Esophagus muscularis mucosa (tissue), 4 donors: ENCODE measurements at regions of chr6 and their contacts with region 1.

Region 1: GRCh38 chr6:137313928-137314855 is 95.0 kb upstream of the IFNGR1 start:
- DNase-seq: no peak
- H3K4me3 ChIP-seq: peak overlapping the region in 2 of 4 donors; percentile 26 to 32
- H3K27ac ChIP-seq: no peak overlapping the region
- H3K4me1 ChIP-seq: peaks cover 8 to 22% (median 14%) of the 10 kb centered on the region in 4 donors
- H3K27me3 ChIP-seq: no peaks in the 10 kb centered on the region
- CTCF ChIP-seq: peak; percentile 76 to 89 (median 83)
- EP300 ChIP-seq: no peak
- POLR2A ChIP-seq: no peak

Region 2: DNA sequence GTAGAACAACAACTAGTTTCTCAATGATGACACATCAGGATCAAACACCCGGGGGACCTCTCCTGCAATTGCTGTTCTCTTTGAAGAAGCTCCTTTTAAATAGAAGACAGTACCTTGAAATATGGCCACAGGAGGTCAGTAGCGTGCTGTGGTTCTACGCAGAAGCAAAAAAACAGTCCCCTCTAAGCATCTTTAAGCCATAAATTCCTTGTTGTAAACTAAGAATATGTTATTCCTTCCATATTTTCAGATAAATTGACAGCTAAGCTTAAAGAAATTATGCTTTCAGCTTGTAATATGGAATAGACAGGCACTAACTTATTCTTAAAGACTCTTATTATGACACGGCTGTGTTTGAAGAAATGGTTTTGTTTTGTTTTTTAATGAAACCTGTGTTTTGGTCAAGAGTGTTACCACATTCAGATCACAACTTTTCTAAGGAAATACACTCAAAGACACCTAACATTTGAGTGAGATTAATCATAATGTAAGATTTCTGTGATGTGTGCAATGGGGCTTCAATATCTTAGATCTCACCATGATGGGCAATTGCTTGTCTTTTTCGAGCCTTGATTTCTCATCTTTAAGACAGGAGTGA is 219.7 kb before region 1 on chr6:
- intact Hi-C with region 1: loop called (anchors 2 kb)
- DNase-seq: no peak
- H3K4me3 ChIP-seq: no peak overlapping the region
- H3K27ac ChIP-seq: no peak overlapping the region
- H3K4me1 ChIP-seq: no peaks in the 10 kb centered on the region
- H3K27me3 ChIP-seq: peaks cover 0 to 8% (median 0%) of the 10 kb centered on the region in 4 donors
- CTCF ChIP-seq: peak; percentile 61 to 82 (median 76)
- EP300 ChIP-seq: no peak
- POLR2A ChIP-seq: no peak

Region 3: GRCh38 chr6:137264311-137265075 is 49.7 kb before region 1 on chr6:
- intact Hi-C with region 1: loop called (anchors 5 kb)
- DNase-seq: no peak
- H3K4me3 ChIP-seq: no peak overlapping the region
- H3K27ac ChIP-seq: no peak overlapping the region
- H3K4me1 ChIP-seq: peaks cover 15 to 36% (median 28%) of the 10 kb centered on the region in 4 donors
- H3K27me3 ChIP-seq: no peaks in the 10 kb centered on the region
- CTCF ChIP-seq: no peak
- EP300 ChIP-seq: no peak
- POLR2A ChIP-seq: no peak

Region 4: GRCh38 chr6:137389150-137389704 is 75.0 kb after region 1 on chr6:
- intact Hi-C with region 1: no loop called
- DNase-seq: no peak
- H3K4me3 ChIP-seq: no peak overlapping the region
- H3K27ac ChIP-seq: no peak overlapping the region
- H3K4me1 ChIP-seq: no peaks in the 10 kb centered on the region
- H3K27me3 ChIP-seq: no peaks in the 10 kb centered on the region
- CTCF ChIP-seq: no peak
- EP300 ChIP-seq: no peak
- POLR2A ChIP-seq: no peak

Region 5: DNA sequence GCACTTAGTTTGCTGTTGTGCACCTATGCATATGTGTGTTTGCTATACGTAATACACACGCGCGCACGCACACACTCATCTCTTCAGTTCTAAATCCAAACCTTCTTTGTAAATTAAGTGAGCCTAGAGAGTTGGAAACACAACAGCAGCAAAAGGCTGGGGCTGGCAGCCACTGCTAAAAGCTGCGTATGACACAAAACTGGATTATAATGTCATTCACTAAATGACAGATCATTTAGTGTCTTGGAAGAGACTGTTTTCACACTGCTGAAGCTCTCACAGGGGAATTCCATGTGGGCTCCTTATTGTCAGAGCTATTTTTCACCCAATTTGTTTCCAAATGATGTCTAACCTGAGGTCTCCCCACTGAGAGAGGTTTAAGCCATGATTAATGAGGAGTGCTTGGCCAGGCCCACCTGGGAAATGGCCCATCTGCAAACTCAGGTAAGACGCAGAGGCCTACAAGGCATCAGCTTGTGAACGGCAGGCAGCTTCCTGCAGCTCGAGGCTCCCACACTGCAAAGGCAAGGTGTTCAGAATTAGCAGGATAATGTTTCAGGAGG is 85.8 kb after region 1 on chr6:
- intact Hi-C with region 1: no loop called
- DNase-seq: peak; percentile 77
- H3K4me3 ChIP-seq: no peak overlapping the region
- H3K27ac ChIP-seq: no peak overlapping the region
- H3K4me1 ChIP-seq: no peaks in the 10 kb centered on the region
- H3K27me3 ChIP-seq: no peaks in the 10 kb centered on the region
- CTCF ChIP-seq: no peak
- EP300 ChIP-seq: no peak
- POLR2A ChIP-seq: no peak